Activated B cell treated with CpG ODN at 0.5 μM for 24 hours (primary cell): ENCODE measurements at regions of chr1 and their contacts with region 1.

Region 1: DNA sequence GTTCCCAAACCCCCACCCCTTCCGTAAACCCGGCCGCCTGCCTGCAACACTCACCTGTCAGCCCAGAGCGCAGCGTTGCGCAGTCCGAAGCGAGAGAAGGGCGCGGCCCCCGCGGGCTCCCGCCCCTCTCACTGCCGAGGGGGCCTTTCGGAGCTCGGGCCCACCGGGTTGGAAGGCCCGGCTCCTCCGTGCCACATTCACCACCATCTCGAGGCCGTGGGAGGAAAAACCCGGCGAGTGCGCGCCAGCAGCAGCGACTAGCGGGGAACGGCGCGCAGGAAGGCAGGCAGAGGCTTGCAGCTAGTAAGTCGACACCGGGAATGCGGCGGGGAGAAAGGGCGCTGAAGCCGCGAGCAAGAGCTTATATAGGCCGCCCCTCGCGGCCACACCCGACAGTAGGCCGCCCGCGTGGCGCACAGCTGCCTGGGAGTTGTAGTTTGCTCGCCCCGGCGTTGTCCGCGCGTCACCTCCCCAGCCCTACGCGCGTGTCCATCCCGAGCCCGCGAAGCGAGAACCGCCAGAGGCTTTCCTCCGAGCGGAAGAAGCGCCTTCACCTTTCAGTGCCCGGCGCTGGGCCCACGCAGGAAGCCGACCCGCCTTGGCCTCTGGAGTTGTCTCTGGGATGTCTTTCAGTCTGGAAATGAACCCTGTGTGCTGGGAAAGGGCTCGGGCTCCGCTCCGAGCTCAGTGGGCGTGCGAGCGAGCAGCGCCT is 10.4 kb upstream of the RAB42 start:
- DNase-seq: peak; percentile 94
- ATAC-seq: peak; percentile 90
- H3K4me3 Mint-ChIP-seq: peak overlapping the region; percentile 96
- H3K27ac Mint-ChIP-seq: peak overlapping the region; percentile 91
- H3K4me1 Mint-ChIP-seq: peaks cover 48% of the 10 kb centered on the region
- H3K27me3 Mint-ChIP-seq: no peaks in the 10 kb centered on the region
- CTCF ChIP-seq: no peak

Region 2: DNA sequence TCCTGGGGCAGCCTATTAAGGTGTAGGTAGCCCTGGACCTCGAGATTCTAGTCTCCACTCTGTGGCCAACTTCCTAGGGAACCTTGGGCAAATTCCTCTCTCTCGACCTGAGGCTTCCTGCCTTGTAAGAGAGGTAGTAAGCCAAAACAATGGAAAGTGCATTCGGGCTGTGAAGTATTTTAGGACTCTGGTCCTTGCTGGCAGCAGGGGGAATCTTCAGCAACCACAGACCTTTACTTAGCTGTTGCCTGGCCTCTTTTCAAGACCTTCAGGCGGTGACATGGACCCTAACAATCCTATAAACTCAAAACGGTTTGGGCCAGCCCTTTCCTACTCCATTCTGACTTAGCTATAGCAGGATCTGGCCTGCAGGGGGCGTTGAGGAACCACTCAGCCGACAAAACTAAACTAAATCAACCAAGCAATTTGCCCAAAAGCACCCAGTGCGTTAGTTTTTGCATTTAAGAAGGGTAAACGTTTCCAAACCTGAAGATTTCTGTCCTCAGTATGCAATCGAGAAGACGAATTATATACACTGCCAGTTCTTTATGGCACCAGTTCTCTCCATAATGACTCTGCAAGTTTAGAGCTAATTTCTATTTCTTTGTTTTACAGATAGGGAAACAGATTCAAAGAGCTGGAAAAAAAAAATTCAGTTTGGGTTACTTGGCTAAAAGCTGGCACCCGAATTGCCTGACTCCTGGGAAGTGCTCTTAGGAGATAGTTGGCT is 333.2 kb before region 1 on chr1:
- CTCF ChIA-PET with region 1: interaction called, 7 read pairs
- POLR2A ChIA-PET with region 1: interaction called, 10 read pairs
- intact Hi-C with region 1: loop called (anchors 5 kb)
- DNase-seq: peak; percentile 69
- ATAC-seq: peak; percentile 23
- H3K4me3 Mint-ChIP-seq: peak overlapping the region; percentile 72
- H3K27ac Mint-ChIP-seq: peak overlapping the region; percentile 99
- H3K4me1 Mint-ChIP-seq: peaks cover 58% of the 10 kb centered on the region
- H3K27me3 Mint-ChIP-seq: no peaks in the 10 kb centered on the region
- CTCF ChIP-seq: peak; percentile 57

Region 3: GRCh38 chr1:28518000-28518744 is 63.5 kb before region 1 on chr1:
- CTCF ChIA-PET with region 1: interaction called, 6 read pairs
- POLR2A ChIA-PET with region 1: interaction called, 190 read pairs
- intact Hi-C with region 1: loop called (anchors 2 kb)
- DNase-seq: peak; percentile 89
- ATAC-seq: peak; percentile 88
- H3K4me3 Mint-ChIP-seq: peak overlapping the region; percentile 90
- H3K27ac Mint-ChIP-seq: peak overlapping the region; percentile 73
- H3K4me1 Mint-ChIP-seq: peaks cover 28% of the 10 kb centered on the region
- H3K27me3 Mint-ChIP-seq: no peaks in the 10 kb centered on the region
- CTCF ChIP-seq: no peak

Region 4: DNA sequence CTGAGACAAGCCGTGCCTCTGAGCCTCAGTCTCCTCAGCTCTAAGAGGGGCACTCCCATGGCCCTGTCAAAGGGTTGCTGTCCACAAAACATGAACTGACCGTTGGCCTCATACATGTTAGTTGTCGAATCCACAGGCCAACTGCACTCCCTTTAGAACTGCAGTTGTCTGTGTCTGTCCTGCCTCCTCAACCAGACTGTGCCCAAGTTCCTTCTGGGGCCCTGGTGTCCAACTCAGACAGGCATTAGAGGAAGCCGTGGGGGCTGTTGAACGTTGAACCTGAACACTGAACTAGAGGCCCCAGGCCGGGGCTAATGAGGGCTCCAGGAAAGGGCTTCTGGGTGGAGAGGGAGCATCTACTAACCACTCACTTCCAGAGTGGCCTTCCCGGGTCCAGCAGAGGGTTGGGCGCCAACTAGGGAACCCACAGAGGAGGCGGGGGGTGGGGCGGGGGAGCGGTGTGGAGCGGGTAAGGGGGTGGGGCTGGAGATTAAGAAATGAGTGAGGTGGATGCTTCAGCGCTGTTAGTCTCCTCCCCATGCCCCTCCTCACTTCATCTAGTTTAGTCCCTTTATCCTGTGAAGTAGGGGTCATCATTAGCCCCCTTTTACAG is 10.1 kb after region 1 on chr1 and contains the start of gene RAB42:
- CTCF ChIA-PET with region 1: no interaction called
- POLR2A ChIA-PET with region 1: interaction called, 20 read pairs
- intact Hi-C with region 1: loop called (anchors 1 kb)
- DNase-seq: no peak
- ATAC-seq: peak; percentile 73
- H3K4me3 Mint-ChIP-seq: peak within 1 kb of the TSS; percentile 87
- H3K27ac Mint-ChIP-seq: no peak within 1 kb of the TSS
- H3K4me1 Mint-ChIP-seq: peaks cover 18% of the 10 kb centered on the region
- H3K27me3 Mint-ChIP-seq: peaks cover 3% of the 10 kb centered on the region
- CTCF ChIP-seq: no peak
- total RNA-seq, gene RAB42: 0.20 and 0.29 TPM in 2 replicates

Region 5: GRCh38 chr1:28648474-28649198 is 66.9 kb after region 1 on chr1 and contains the start of gene RNU11:
- CTCF ChIA-PET with region 1: interaction called, 7 read pairs
- POLR2A ChIA-PET with region 1: interaction called, 106 read pairs
- intact Hi-C with region 1: loop called (anchors 1 kb)
- DNase-seq: peak; percentile 72
- ATAC-seq: peak; percentile 65
- H3K4me3 Mint-ChIP-seq: peak within 1 kb of the TSS; percentile 91
- H3K27ac Mint-ChIP-seq: peak within 1 kb of the TSS; percentile 100
- H3K4me1 Mint-ChIP-seq: peaks cover 35% of the 10 kb centered on the region
- H3K27me3 Mint-ChIP-seq: no peaks in the 10 kb centered on the region
- CTCF ChIP-seq: no peak
- total RNA-seq, gene RNU11: not detected in 2 replicates

Region 6: DNA sequence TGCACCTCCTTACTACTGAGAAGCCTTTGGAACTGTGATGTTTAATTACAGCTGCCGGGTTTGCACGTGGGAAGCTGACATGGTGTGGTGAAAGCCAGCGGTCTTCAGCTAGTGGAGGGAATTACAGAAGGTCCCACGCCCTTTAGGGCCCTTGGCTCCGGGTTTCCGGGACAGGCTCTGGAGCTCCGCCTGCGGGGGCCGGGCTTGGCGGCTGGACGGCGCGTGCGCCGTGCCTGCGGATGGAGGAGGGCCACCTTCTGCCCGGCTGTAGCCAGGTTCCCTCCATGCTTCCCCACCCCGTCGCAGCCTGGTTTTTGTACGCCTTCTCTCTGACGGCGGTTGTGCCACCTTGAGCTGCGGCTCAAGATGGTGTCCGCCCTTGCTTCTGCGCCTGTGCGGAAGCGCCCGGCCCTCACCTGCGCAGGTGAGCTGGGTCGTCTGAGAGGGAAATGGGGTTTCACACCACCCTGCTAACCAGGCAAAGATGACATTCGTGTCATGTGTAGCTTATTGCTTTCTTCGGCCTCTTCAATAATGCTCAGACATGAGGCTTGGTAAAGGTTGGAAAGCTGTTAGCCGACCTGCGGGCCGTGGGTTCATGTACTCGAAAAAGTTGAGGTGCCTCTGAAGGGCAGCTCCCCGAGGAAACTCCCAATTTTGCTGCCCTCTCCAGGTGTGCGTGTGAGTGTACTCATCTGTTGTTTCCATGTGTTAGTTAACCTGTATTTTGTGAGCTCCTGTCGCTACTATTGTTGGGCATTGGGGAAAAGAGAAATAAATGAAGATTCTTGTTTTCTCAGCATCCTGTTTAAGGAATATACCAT is 193.6 kb after region 1 on chr1:
- CTCF ChIA-PET with region 1: no interaction called
- POLR2A ChIA-PET with region 1: interaction called, 10 read pairs
- intact Hi-C with region 1: no loop called
- DNase-seq: peak; percentile 62
- ATAC-seq: peak; percentile 95
- H3K4me3 Mint-ChIP-seq: peak overlapping the region; percentile 87
- H3K27ac Mint-ChIP-seq: peak overlapping the region; percentile 61
- H3K4me1 Mint-ChIP-seq: peaks cover 10% of the 10 kb centered on the region
- H3K27me3 Mint-ChIP-seq: no peaks in the 10 kb centered on the region
- CTCF ChIP-seq: no peak